Caco-2 (cell line): ENCODE measurements at regions of chr17 and their contacts with region 1.

Region 1: DNA sequence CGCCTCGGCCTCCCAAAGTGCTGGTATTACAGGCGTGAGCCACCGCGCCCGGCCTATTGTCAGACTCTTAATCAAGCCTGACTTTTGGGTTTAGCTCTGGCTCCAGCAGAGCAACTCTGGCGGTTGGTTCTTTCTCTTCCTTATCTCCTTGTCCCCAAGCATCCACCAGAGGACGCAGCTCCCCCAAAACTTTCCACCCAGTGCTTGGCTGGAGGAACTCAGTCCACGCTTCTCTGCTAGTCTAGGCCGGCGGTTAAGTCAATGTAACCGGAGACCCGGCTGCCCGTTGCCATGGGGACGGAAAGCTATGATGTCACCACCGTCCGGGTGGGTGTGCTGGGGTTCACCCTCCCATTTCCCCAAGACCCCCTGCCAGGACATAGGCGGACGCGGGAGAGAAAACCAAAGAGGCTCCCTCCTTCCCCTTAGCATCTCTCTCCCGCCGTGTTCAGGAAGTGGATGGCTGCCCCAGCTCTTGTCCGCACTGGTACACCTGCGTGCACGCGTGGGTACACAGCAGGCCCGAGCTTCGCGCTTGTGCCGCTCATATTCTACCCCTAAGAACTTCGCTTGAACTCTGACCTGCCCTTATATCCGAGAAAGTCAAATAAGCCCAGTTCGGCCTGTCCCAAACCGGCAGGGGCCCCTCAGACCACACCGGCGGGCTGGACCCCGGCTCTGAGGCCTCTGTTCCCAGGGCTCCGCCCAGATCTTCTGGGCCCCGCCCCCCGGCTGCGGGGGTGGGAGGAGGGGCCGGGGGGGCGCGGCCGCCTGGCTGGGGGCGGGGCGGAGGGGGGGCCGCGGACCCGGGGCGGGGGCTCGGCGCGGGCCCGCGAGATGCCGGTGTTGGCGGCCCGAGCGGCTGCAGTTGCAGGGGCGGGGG is at the start of gene RND2:
- DNase-seq: peak; percentile 85 to 88
- H3K4me3 ChIP-seq: peak within 1 kb of the TSS; percentile 53
- H3K4me3 Mint-ChIP-seq: peak within 1 kb of the TSS; percentile 69
- H3K27ac Mint-ChIP-seq: peak within 1 kb of the TSS; percentile 85
- H3K4me1 ChIP-seq: peaks cover 12% of the 10 kb centered on the region
- H3K4me1 Mint-ChIP-seq: peaks cover 2% of the 10 kb centered on the region
- H3K27me3 ChIP-seq: no peaks in the 10 kb centered on the region
- H3K27me3 Mint-ChIP-seq: no peaks in the 10 kb centered on the region
- CTCF ChIP-seq: peak; percentile 34 to 79
- total RNA-seq, gene RND2: 1.2 and 1.7 TPM in 2 replicates

Region 2: GRCh38 chr17:42609182-42609813 is 415.4 kb before region 1 on chr17 and contains the starts of genes RETREG3 and TUBG1:
- CTCF ChIA-PET with region 1: no interaction called
- POLR2A ChIA-PET with region 1: interaction called, 10 read pairs
- intact Hi-C with region 1: no loop called
- DNase-seq: peak; percentile 99
- H3K4me3 ChIP-seq: peak within 1 kb of the TSS; percentile 72
- H3K4me3 Mint-ChIP-seq: peak within 1 kb of the TSS; percentile 90
- H3K27ac Mint-ChIP-seq: peak within 1 kb of the TSS; percentile 77
- H3K4me1 ChIP-seq: peaks cover 6% of the 10 kb centered on the region; the same call in 1 of the 2 replicates
- H3K4me1 Mint-ChIP-seq: peaks cover 13% of the 10 kb centered on the region
- H3K27me3 ChIP-seq: no peaks in the 10 kb centered on the region
- H3K27me3 Mint-ChIP-seq: no peaks in the 10 kb centered on the region
- CTCF ChIP-seq: peak; percentile 21 to 51
- total RNA-seq, gene RETREG3: 58.6 and 59.0 TPM in 2 replicates
- total RNA-seq, gene TUBG1: 108 and 112 TPM in 2 replicates

Region 3: DNA sequence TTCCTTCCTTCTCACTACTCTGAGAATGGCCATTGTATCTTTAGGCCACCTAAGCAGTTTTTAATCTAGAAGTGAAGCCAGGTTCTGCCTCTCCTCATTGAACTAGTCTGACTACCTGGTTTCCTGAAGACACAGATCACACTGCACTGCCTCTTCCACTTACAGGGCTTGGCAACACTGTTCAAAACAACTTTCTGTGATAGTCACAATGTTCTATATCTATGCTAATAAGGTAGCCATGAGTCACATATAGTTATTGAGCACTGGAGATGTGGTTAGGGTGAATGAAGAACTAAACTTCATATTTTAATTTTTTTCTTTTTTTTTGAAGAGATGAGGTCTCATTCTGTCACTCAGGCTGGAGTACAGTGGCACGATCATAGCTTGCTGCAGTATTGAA is 27.3 kb after region 1 on chr17:
- CTCF ChIA-PET with region 1: no interaction called
- POLR2A ChIA-PET with region 1: interaction called, 10 read pairs
- intact Hi-C with region 1: no loop called
- DNase-seq: no peak
- H3K4me3 ChIP-seq: no peak overlapping the region
- H3K4me3 Mint-ChIP-seq: no peak overlapping the region
- H3K27ac Mint-ChIP-seq: no peak overlapping the region
- H3K4me1 ChIP-seq: no peaks in the 10 kb centered on the region
- H3K4me1 Mint-ChIP-seq: no peaks in the 10 kb centered on the region
- H3K27me3 ChIP-seq: no peaks in the 10 kb centered on the region
- H3K27me3 Mint-ChIP-seq: no peaks in the 10 kb centered on the region
- CTCF ChIP-seq: no peak

Region 4: GRCh38 chr17:43125133-43125966 is 100.7 kb after region 1 on chr17 and contains the start of gene BRCA1:
- CTCF ChIA-PET with region 1: interaction called, 5 read pairs
- POLR2A ChIA-PET with region 1: interaction called, 8 read pairs
- intact Hi-C with region 1: loop called (anchors 1 kb)
- DNase-seq: peak; percentile 98 to 99
- H3K4me3 ChIP-seq: peak within 1 kb of the TSS; percentile 90
- H3K4me3 Mint-ChIP-seq: peak within 1 kb of the TSS; percentile 98
- H3K27ac Mint-ChIP-seq: peak within 1 kb of the TSS; percentile 99
- H3K4me1 ChIP-seq: peaks cover 18% of the 10 kb centered on the region
- H3K4me1 Mint-ChIP-seq: no peaks in the 10 kb centered on the region
- H3K27me3 ChIP-seq: no peaks in the 10 kb centered on the region
- H3K27me3 Mint-ChIP-seq: no peaks in the 10 kb centered on the region
- CTCF ChIP-seq: no peak
- total RNA-seq, gene BRCA1: 50.8 and 51.1 TPM in 2 replicates